Activated CD4-positive, alpha-beta T cell treated with anti-CD3 and anti-CD28 coated beads for 36 hours (primary cell): ENCODE measurements at regions of chr12 and their contacts with region 1.

Region 1: GRCh38 chr12:49623142-49623904 is at the start of gene PRPF40B:
- DNase-seq: peak; percentile 92
- ATAC-seq: peak; percentile 76
- H3K4me3 Mint-ChIP-seq: peak within 1 kb of the TSS; percentile 72
- H3K27ac Mint-ChIP-seq: peak within 1 kb of the TSS; percentile 86
- H3K4me1 Mint-ChIP-seq: peaks cover 31% of the 10 kb centered on the region
- H3K27me3 Mint-ChIP-seq: peaks cover 11% of the 10 kb centered on the region
- total RNA-seq, gene PRPF40B: 6.9 to 8.1 TPM

Region 2: GRCh38 chr12:49322708-49323523 is 300.4 kb before region 1 on chr12 and contains the start of gene TROAP:
- CTCF ChIA-PET with region 1: no interaction called
- POLR2A ChIA-PET with region 1: no interaction called
- intact Hi-C with region 1: loop called in 1 of 2 experiments (anchors 1 kb)
- DNase-seq: peak; percentile 99
- ATAC-seq: peak; percentile 96
- H3K4me3 Mint-ChIP-seq: peak within 1 kb of the TSS; percentile 95
- H3K27ac Mint-ChIP-seq: peak within 1 kb of the TSS; percentile 95
- H3K4me1 Mint-ChIP-seq: peaks cover 10% of the 10 kb centered on the region
- H3K27me3 Mint-ChIP-seq: no peaks in the 10 kb centered on the region
- total RNA-seq, gene TROAP: 64.5 to 84.3 TPM

Region 3: GRCh38 chr12:49538510-49539403 is 84.6 kb before region 1 on chr12 and contains the start of gene KCNH3:
- CTCF ChIA-PET with region 1: no interaction called
- POLR2A ChIA-PET with region 1: no interaction called
- intact Hi-C with region 1: loop called in 1 of 2 experiments (anchors 1 kb)
- DNase-seq: peak; percentile 90
- ATAC-seq: peak; percentile 82
- H3K4me3 Mint-ChIP-seq: peak within 1 kb of the TSS; percentile 55
- H3K27ac Mint-ChIP-seq: no peak within 1 kb of the TSS
- H3K4me1 Mint-ChIP-seq: peaks cover 4% of the 10 kb centered on the region
- H3K27me3 Mint-ChIP-seq: peaks cover 17% of the 10 kb centered on the region
- total RNA-seq, gene KCNH3: 2.4 to 3.3 TPM

Region 4: GRCh38 chr12:49598527-49598926 is 24.8 kb before region 1 on chr12:
- CTCF ChIA-PET with region 1: no interaction called
- POLR2A ChIA-PET with region 1: no interaction called
- intact Hi-C with region 1: no loop called
- DNase-seq: no peak
- ATAC-seq: no peak
- H3K4me3 Mint-ChIP-seq: no peak overlapping the region
- H3K27ac Mint-ChIP-seq: no peak overlapping the region
- H3K4me1 Mint-ChIP-seq: no peaks in the 10 kb centered on the region
- H3K27me3 Mint-ChIP-seq: no peaks in the 10 kb centered on the region

Region 5: DNA sequence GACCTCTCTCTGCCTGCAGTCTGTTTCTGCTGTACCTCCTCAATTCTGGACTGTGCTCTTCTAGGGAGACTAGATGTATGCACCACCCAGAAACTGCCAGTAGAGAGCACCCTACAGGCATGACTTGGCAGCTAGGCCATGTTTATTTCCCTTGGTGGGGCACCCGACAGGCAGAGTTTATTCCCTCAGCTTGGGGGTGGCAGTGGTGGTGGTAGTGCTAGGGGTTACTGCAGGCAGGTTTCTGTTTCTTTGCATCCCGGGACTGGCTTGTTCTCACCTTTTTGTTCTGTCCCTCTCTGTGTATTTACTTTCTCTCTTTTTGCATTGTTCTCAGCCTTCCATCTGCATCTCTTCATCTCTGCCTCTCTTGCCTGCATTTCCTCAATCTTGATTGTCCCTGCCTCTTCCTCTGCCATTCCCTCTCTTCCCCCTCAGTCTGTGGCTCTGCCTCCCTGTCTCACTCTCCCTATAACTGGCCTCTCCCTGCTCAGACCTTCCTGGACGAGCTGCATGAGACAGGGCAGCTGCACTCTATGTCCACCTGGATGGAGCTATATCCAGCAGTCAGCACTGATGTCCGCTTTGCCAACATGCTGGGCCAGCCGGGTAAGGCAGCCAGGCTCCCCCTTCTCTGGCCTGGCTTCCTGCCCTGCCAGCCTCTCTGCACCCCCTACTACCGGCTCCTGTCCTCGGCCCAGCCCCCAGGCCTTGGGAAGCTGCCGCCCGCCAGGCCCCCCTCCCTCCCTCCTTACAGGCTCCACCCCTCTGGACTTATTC is 13.8 kb after region 1 on chr12:
- CTCF ChIA-PET with region 1: interaction called, 29 read pairs
- POLR2A ChIA-PET with region 1: interaction called, 3 read pairs
- intact Hi-C with region 1: no loop called
- DNase-seq: peak; percentile 78
- ATAC-seq: peak; percentile 97
- H3K4me3 Mint-ChIP-seq: no peak overlapping the region
- H3K27ac Mint-ChIP-seq: peak overlapping the region; percentile 33
- H3K4me1 Mint-ChIP-seq: peaks cover 14% of the 10 kb centered on the region
- H3K27me3 Mint-ChIP-seq: no peaks in the 10 kb centered on the region

Region 6: DNA sequence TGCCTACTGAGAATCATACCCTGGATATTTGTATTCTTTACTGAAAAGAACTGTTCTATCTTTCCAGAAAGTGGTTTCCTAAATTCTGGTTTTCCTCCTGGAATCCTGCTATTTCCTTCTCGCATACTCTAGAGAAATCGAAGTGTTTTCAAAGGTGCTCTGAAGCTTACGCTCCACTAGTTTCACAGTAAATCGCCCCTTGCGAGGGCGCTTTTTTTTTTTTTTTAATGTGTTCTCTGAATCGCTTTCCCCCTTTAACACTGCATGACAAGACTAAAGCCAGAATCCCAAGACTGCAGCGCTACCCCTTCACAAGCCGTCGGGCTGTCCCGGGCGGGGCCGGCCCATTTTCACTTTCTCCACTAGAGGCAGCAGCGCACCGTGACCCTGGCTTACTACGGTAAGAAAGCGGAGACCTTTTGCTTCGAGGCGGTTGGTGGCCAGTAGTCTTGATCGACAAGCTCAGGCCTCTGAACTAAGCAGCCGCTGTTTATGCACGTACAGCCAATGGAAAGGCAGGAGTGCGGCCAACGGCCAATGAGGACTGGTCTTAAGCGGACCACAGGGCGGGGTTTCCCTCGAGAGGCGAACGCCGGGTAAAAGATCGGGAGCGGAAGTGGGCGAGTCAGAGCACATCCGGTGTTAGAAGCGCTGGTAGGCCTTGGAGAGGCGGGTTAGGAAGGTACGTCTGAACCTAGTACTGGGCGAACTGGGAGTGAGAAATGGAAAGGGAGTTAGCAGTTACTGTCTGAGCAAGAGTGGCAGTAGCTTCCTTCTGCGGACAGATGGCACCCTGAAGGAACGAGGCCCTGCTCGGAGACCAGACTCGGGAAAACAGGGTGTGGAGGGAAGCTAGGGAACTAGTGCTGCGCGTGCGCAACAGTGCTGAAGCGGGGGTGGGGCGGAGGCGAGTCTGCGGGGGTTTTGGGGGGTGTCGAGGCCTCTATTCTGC is 117.9 kb after region 1 on chr12 and contains the start of gene TMBIM6:
- CTCF ChIA-PET with region 1: interaction called, 4 read pairs
- POLR2A ChIA-PET with region 1: interaction called, 15 read pairs
- intact Hi-C with region 1: loop called in 1 of 2 experiments (anchors 1 kb)
- DNase-seq: peak; percentile 99
- ATAC-seq: peak; percentile 93
- H3K4me3 Mint-ChIP-seq: peak within 1 kb of the TSS; percentile 89
- H3K27ac Mint-ChIP-seq: peak within 1 kb of the TSS; percentile 100
- H3K4me1 Mint-ChIP-seq: peaks cover 45% of the 10 kb centered on the region
- H3K27me3 Mint-ChIP-seq: no peaks in the 10 kb centered on the region
- total RNA-seq, gene TMBIM6: 378 to 450 TPM

Region 7: DNA sequence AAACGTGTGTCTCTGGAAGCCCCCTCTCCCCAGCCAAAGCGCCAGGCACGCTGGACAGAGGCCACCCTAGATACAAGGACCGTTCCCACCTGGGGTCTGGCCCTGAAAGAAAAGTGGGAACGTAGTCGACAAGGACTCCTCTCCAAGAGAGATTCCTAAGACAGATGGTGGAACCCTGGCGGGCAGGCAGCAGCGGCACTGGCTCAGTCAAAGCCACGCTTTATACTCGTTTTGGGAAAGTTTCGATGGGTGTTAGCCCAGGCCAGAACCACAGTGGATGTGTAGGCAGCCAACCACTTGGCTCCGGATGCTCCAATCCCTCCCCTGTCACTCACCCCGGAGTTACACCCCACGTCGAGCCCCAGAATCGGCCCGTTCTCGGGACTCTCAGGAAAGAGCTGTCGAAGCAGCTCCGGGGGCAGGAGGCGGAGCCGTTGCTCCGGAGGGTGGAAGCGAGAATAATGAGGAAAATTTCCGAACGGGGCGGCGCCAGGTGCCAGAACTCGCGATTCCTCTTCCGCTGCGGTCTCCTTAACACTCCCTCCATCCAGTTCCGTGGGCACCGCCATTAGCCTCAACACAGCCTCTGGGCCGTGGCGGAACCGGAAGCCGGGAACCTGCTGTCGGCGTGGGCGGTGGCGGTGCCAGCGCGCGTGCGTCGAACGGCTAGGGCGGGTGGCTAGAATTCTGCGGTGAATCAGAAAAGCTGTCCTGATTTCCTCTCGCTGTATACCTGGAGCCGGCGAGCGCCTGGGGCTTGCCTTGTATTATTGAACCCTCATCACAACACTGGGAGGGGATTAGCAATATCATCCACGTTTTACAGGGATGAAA is 219.4 kb after region 1 on chr12 and contains the start of gene BCDIN3D:
- CTCF ChIA-PET with region 1: no interaction called
- POLR2A ChIA-PET with region 1: no interaction called
- intact Hi-C with region 1: loop called in 1 of 2 experiments (anchors 2 kb)
- DNase-seq: peak; percentile 97
- ATAC-seq: peak; percentile 92
- H3K4me3 Mint-ChIP-seq: peak within 1 kb of the TSS; percentile 90
- H3K27ac Mint-ChIP-seq: peak within 1 kb of the TSS; percentile 91
- H3K4me1 Mint-ChIP-seq: peaks cover 30% of the 10 kb centered on the region
- H3K27me3 Mint-ChIP-seq: no peaks in the 10 kb centered on the region
- total RNA-seq, gene BCDIN3D: 5.5 to 5.6 TPM

Region 8: GRCh38 chr12:50132505-50133135 is 509.3 kb after region 1 on chr12:
- CTCF ChIA-PET with region 1: no interaction called
- POLR2A ChIA-PET with region 1: interaction called, 10 read pairs
- intact Hi-C with region 1: no loop called
- DNase-seq: no peak
- ATAC-seq: peak; percentile 71
- H3K4me3 Mint-ChIP-seq: no peak overlapping the region
- H3K27ac Mint-ChIP-seq: peak overlapping the region; percentile 74
- H3K4me1 Mint-ChIP-seq: peaks cover 6% of the 10 kb centered on the region
- H3K27me3 Mint-ChIP-seq: no peaks in the 10 kb centered on the region